AG04450 (cell line): ENCODE measurements at regions of chr12 and their contacts with region 1.

Region 1: GRCh38 chr12:101823891-101824290 is 6.9 kb downstream of the GNPTAB start:
- DNase-seq: no peak
- H3K4me3 ChIP-seq: no peak overlapping the region
- H3K27ac ChIP-seq: peak overlapping the region; percentile 12
- H3K27me3 ChIP-seq: no peaks in the 10 kb centered on the region
- CTCF ChIP-seq: peak; percentile 6; the same call in 1 of the 2 replicates

Region 2: GRCh38 chr12:101782273-101782731 is 41.6 kb before region 1 on chr12:
- CTCF ChIA-PET with region 1: interaction called, 10 read pairs
- POLR2A ChIA-PET with region 1: no interaction called
- DNase-seq: no peak
- H3K4me3 ChIP-seq: no peak overlapping the region
- H3K27ac ChIP-seq: peak overlapping the region; percentile 53
- H3K27me3 ChIP-seq: no peaks in the 10 kb centered on the region
- CTCF ChIP-seq: no peak

Region 3: GRCh38 chr12:101859664-101860607 is 36.0 kb after region 1 on chr12:
- CTCF ChIA-PET with region 1: interaction called, 11 read pairs
- POLR2A ChIA-PET with region 1: interaction called, 3 read pairs
- DNase-seq: no peak
- H3K4me3 ChIP-seq: no peak overlapping the region
- H3K27ac ChIP-seq: no peak overlapping the region
- H3K27me3 ChIP-seq: no peaks in the 10 kb centered on the region
- CTCF ChIP-seq: no peak